ENCODE measurements at regions of chr19 and their contacts with region 1.

Region 1: DNA sequence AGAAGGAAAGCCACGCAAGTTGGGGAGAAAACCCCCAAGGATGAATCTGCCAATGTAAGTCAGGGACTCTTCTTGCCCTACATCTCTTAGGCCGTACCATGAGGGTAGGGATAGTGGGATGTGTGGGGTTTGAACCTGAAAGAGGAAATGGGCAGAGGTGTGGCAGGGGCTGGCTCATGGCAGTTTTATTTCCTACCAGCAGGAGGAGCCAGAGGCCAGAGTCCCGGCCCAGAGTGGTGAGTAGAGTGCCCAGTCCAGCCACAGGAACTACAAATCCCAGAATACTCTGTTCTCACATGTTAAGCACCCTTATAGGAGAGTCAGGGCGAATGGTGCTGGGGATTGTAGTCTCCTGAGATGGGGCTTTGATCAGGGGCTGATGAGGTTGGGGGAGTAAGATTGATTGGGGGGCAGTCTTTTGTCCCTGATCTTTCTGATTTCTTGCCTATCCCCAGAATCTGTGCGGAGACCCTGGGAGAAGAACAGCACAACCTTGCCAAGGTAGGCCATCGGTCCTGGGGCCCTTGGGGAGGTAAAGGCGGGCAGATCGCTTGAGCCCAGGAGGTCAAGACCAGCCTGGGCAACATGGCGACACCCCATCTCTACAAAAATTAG is 16.5 kb downstream of the VASP start:
- DNase-seq: peak; percentile 72
- H3K4me3 ChIP-seq: no peak overlapping the region
- H3K27ac ChIP-seq: no peak overlapping the region
- H3K4me1 ChIP-seq: peaks cover 22% of the 10 kb centered on the region
- H3K27me3 ChIP-seq: no peaks in the 10 kb centered on the region
- CTCF ChIP-seq: peak; percentile 90 to 91

Region 2: DNA sequence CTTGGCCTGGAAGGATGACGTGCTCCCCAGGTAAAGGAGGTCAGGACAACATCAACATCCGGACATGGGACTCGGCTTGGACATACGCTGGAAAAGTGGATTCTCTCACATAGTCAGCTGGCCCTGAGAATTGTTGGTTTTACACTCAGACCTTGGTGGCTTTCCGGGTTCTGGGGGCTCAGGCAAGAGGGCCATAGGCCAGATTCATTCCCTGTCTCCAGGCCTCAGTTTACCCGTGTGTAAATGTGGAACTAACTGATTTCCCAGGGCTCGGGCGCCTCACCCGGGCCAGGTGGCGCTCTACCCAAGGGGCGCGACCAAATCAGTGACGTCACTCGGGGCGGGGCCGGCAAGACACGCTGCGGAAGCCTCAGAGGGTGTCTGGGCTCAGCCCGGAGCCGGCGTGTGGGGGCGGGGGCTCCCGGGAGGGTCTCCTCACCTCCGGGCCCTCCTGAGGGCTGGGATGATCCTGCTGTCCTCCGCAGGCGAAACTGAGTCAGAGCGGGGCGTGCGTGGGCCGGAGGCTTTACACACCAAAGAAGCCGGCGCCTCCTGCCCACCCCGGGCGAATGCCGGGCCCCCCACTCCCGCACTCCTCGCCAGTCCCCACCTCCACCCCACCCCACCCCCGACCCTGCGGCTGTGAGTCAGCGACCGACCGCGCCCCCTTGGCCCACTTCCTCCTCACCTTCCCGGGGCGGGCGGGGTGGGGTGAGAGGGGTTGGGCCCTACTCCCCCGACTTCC is 17.3 kb before region 1 on chr19:
- CTCF ChIA-PET with region 1: no interaction called
- dilution Hi-C with region 1: no loop called
- in situ Hi-C with region 1: no loop called
- intact Hi-C with region 1: loop called (anchors 2 kb)
- DNase-seq: peak; percentile 94
- H3K4me3 ChIP-seq: peak overlapping the region; percentile 78 to 95 (median 90)
- H3K27ac ChIP-seq: peak overlapping the region; percentile 90
- H3K4me1 ChIP-seq: peaks cover 17% of the 10 kb centered on the region
- H3K27me3 ChIP-seq: no peaks in the 10 kb centered on the region
- CTCF ChIP-seq: peak; percentile 17 to 69

Region 3: GRCh38 chr19:45558399-45558878 is 34.7 kb after region 1 on chr19:
- CTCF ChIA-PET with region 1: no interaction called
- dilution Hi-C with region 1: no loop called
- in situ Hi-C with region 1: loop called in 1 of 2 experiments (anchors 5 kb)
- intact Hi-C with region 1: loop called (anchors 1 kb)
- DNase-seq: peak; percentile 40
- H3K4me3 ChIP-seq: no peak overlapping the region
- H3K27ac ChIP-seq: no peak overlapping the region
- H3K4me1 ChIP-seq: peaks cover 20% of the 10 kb centered on the region
- H3K27me3 ChIP-seq: no peaks in the 10 kb centered on the region
- CTCF ChIP-seq: peak; percentile 88 to 90

Region 4: DNA sequence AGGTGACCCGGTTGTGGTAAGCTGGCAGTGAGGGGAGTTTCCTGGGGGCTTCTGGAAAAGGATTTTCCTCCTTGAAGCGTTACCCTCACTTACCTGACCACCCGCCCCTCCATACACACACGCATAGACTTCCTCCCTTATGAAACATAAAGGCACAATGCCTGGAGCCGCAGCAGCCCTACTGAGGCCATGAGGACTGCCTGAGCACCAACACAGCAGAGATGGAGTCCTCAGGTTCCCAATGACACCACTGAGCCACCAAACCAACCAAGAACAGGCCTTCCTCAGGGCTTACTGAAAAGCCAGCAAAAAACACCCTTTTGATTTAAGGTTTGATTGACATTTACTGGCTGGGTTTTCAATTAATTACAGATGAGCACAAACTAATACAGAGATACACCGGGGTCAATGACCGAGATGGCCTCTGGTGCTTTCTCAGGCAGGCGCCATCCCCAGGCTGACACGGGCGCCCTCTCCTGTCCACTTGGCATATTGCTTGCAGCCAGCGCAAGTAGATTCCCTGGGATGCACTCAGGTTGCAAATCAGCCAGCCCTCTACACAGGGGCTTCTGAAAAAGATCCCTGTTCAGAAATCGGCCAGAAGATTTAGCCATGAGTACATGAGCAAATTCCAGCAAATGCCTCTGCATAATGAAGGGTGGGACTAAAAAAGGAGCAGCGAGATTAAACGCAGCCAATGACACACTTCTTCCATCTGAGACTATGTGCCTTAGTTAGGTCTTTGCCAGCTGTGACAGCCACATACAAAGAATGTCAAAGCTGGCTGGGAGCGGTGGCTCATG is 46.1 kb after region 1 on chr19:
- CTCF ChIA-PET with region 1: no interaction called
- dilution Hi-C with region 1: no loop called
- in situ Hi-C with region 1: loop called in 1 of 2 experiments (anchors 5 kb)
- intact Hi-C with region 1: loop called (anchors 1 kb)
- DNase-seq: no peak
- H3K4me3 ChIP-seq: no peak overlapping the region
- H3K27ac ChIP-seq: peak overlapping the region; percentile 79
- H3K4me1 ChIP-seq: peaks cover 28% of the 10 kb centered on the region
- H3K27me3 ChIP-seq: no peaks in the 10 kb centered on the region
- CTCF ChIP-seq: peak; percentile 78 to 79

Region 5: DNA sequence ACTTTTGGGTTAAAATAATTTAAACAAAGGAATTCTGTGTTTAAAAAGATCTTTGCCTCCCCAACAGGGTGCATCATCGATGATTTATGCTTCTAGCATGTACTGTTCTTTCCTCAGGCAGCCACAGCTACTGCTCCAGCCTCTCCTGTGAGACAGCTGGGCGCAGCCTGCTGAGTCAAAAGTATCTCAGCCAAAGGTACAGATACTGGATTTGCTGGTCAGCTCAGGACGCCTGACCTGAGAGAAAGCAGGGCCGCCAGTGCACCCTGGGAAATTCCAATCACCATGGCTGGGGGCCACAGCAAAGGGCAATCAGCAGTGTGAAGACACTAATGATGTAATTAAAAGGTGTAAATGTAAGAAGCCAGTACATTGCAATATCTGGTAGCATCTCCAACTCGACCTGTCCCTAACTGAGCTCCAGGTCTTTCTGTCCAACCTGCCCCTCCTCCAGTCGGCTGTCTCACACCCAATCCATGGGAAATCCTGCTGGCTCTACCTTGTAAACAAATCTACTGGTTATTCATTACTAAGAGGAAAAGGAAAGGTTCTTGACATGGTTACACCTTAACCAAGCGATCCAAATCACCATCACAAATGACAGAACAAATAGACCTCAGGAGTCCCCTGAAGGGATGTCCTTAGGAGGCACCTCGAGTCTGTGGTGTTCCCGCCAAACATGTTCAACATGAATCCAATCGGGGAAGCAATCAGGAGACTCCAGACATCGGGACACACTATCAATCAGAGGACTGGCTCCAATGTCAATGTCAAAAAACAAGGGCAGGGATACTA is 53.6 kb after region 1 on chr19:
- CTCF ChIA-PET with region 1: no interaction called
- dilution Hi-C with region 1: no loop called
- in situ Hi-C with region 1: loop called in 1 of 2 experiments (anchors 5 kb)
- intact Hi-C with region 1: no loop called
- DNase-seq: peak; percentile 99
- H3K4me3 ChIP-seq: no peak overlapping the region
- H3K27ac ChIP-seq: peak overlapping the region; percentile 98
- H3K4me1 ChIP-seq: peaks cover 52% of the 10 kb centered on the region
- H3K27me3 ChIP-seq: no peaks in the 10 kb centered on the region
- CTCF ChIP-seq: no peak

Region 6: GRCh38 chr19:45657520-45658167 is 133.9 kb after region 1 on chr19:
- CTCF ChIA-PET with region 1: no interaction called
- dilution Hi-C with region 1: no loop called
- in situ Hi-C with region 1: no loop called
- intact Hi-C with region 1: no loop called
- DNase-seq: no peak
- H3K4me3 ChIP-seq: no peak overlapping the region
- H3K27ac ChIP-seq: no peak overlapping the region
- H3K4me1 ChIP-seq: no peaks in the 10 kb centered on the region
- H3K27me3 ChIP-seq: no peaks in the 10 kb centered on the region
- CTCF ChIP-seq: no peak

Region 7: GRCh38 chr19:45681391-45682015 is 157.8 kb after region 1 on chr19:
- CTCF ChIA-PET with region 1: no interaction called
- dilution Hi-C with region 1: no loop called
- in situ Hi-C with region 1: no loop called
- intact Hi-C with region 1: loop called (anchors 1 kb)
- DNase-seq: peak; percentile 83
- H3K4me3 ChIP-seq: peak overlapping the region in 1 of 3 experiments; percentile 13
- H3K27ac ChIP-seq: no peak overlapping the region
- H3K4me1 ChIP-seq: peaks cover 17% of the 10 kb centered on the region
- H3K27me3 ChIP-seq: no peaks in the 10 kb centered on the region
- CTCF ChIP-seq: peak; percentile 75 to 92

Measured in mammary epithelial cell (primary cell).